ENCODE measurements at regions of chr2 and their contacts with region 1.

Region 1: DNA sequence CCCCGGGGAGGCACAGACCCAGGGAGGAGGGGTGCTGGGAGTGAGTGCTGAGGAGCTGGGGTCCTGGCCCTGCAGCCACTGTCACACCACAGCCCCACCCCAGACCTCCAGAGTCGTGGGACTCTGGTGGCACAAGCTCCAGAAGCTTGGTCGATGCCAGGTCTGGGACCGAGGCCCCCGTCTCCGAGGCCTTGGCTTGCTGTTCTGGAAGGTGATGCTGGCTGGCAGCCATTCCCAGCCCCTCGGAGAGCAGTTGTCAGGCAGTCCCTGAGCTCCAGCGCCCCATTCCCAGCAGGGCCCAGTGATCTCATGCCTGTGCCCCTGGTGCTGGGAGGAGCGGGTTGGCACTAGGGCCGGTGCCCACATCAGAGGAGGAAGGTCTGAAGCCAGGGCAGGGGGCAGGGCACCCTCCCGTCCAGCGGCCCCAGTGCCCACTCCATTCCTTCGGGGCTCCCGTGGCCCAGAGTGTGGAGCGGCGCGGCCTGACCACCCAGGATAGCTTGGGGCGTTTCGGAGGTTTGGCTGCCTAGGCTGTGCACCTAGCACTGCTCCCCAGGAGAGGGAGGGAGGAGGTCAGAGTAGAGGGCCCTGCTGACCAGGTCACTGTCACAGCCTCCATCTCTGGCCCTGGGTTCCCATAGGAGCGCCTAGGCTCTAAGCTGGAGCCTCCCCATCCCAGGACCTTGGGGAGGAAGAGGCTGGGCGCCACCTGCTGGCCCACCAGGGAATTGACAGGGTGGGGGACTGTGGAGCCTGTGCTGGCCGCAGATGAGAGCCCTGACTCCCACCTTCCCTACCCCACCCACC is 16.8 kb upstream of the ALPI start:
- DNase-seq: peak; percentile 65
- ATAC-seq: peak; percentile 55
- H3K4me3 Mint-ChIP-seq: no peak overlapping the region
- H3K27ac Mint-ChIP-seq: no peak overlapping the region
- H3K4me1 Mint-ChIP-seq: peaks cover 3% of the 10 kb centered on the region
- H3K27me3 Mint-ChIP-seq: peaks cover 2% of the 10 kb centered on the region

Region 2: DNA sequence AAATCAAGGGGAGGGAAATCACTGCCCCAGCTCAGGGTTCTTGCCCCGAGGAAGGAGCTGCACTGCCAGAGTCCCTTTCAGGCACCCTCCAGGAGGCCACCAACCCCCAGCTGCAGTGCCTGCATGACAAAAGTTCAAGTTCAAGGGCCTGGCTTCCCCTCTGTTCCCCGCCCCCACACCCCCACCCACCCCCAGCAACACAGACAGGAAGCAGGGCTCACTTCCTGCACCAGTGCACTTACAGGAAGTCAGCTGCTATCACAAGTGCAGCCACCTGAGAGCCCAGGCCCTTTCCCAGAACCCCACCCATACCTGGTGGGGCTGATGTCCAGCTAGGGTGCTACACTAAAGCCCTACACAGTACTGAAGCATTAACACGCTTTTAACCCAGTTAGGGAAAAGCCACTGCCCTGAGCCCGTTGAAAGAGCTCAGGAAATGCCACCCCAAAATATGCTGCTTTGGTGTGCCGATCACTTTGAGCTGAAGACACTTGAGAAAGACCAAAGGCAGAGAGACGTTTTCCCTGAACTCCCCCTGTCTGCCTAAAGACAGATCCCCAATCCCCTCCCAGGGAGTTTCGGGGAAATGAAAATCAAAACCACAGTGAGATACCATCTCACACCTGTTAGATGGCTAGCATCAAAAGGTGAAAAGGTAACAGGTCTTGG is 1836.5 kb before region 1 on chr2:
- CTCF ChIA-PET with region 1: no interaction called
- POLR2A ChIA-PET with region 1: no interaction called
- intact Hi-C with region 1: no loop called
- DNase-seq: peak; percentile 71
- ATAC-seq: peak; percentile 83
- H3K4me3 Mint-ChIP-seq: peak overlapping the region; percentile 6
- H3K27ac Mint-ChIP-seq: peak overlapping the region; percentile 89
- H3K4me1 Mint-ChIP-seq: peaks cover 48% of the 10 kb centered on the region
- H3K27me3 Mint-ChIP-seq: no peaks in the 10 kb centered on the region

Region 3: DNA sequence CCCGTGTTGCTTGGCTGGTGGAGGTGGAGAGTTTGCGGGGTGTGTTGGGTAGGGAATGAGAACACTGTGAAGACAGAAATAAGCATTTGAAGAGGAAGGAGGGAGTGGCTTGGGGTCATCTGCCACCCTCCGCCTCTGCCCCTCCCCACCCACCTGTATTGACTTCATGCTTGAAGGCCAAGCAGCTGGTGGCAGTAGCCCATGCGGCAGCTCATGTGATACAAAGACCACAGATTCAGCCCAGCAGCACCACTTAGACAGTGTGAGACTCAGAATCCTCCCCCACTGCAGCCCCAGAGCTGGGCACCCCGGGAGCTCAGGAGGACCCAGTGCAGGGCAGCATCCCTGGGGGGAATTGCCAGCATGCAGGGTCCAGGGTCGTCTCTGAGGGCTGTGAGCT is 528.4 kb before region 1 on chr2:
- CTCF ChIA-PET with region 1: interaction called, 11 read pairs
- POLR2A ChIA-PET with region 1: no interaction called
- intact Hi-C with region 1: loop called (anchors 1 kb)
- DNase-seq: no peak
- ATAC-seq: no peak
- H3K4me3 Mint-ChIP-seq: no peak overlapping the region
- H3K27ac Mint-ChIP-seq: no peak overlapping the region
- H3K4me1 Mint-ChIP-seq: peaks cover 13% of the 10 kb centered on the region
- H3K27me3 Mint-ChIP-seq: no peaks in the 10 kb centered on the region

Region 4: DNA sequence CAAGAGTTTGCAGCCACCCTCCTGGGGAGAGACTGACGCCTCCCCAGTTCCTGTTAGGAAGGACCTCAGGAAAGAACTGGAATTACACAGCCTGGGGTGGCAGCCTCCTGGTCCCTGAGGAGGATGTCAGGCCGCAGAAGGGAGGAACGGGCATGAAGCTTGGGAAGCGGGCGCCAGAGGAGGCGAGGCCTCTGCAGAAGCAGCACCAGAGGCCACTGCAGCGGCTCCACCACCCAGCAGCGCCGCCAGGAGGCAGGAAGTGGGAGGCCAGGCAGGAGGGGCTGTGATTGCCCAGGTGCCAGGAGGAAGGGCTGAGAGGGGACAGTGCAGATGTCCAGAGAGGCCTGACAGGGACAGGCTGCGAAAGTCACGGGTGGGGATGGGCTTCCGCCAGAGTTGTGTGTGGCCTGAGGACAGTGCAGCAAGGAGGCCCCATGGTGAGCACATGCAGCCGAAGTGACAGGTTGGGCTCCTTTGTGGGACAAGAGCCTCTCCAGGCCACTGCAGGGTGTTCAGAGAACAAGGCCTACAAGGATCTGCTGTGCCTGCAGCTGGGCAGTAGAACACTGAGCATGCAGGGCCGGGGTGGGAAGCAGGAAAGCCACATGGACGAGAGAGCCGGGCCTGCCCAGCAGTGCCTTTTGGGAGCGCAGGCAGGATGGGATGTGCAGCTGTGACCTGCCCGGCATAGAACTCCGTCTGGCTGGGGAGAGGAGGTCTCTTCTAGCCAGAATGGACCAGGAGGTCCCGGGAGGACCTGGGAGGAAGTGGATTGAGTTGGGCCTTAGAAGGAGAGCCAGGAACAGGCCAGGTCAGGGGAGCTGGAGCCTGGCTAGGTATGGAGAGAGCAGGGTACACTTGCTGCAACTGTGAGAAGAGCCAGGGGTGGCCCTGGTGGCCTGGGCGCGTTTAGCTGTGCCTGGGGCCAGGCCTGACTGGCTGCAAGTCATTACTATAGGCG is 99.8 kb before region 1 on chr2:
- CTCF ChIA-PET with region 1: interaction called, 3 read pairs
- POLR2A ChIA-PET with region 1: no interaction called
- intact Hi-C with region 1: loop called (anchors 1 to 5 kb)
- DNase-seq: peak; percentile 22
- ATAC-seq: no peak
- H3K4me3 Mint-ChIP-seq: no peak overlapping the region
- H3K27ac Mint-ChIP-seq: no peak overlapping the region
- H3K4me1 Mint-ChIP-seq: peaks cover 2% of the 10 kb centered on the region
- H3K27me3 Mint-ChIP-seq: no peaks in the 10 kb centered on the region

Region 5: DNA sequence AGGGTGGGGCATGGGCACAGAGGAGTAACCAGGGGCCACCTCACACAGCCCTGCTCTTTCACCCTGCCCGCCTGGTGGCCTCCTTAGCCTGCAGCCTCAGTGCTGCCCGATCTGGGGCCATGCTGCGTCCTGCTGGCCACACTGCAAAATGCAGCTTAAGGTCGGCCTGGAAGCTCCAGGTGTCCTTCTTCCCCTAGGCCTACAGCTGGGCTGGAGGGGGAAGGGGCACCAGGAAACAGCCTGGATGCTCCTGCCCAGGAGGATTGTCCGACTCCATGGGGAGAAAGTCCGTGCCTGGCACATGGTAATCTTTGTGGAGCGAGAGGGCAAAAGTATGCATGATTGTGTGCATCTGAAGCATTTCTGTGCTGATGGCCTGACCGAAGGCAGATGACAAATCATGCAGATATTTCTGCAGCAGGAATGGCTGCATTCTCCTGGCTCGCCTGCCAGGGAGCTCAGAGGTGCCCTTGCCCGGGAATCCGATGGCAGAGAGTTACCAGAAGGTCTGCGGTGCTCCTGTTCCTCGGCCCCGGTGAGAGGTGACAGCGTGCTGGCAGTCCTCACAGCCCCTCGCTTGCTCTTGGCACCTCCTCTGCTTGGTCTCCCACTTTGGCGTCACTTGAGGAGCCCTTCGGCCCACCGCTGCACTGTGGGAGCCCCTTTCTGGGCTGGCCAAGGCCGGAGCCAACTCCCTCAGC is 73.4 kb before region 1 on chr2:
- CTCF ChIA-PET with region 1: interaction called, 4 read pairs
- POLR2A ChIA-PET with region 1: interaction called, 4 read pairs
- intact Hi-C with region 1: loop called in 1 of 2 experiments (anchors 2 kb)
- DNase-seq: peak; percentile 43
- ATAC-seq: peak; percentile 70
- H3K4me3 Mint-ChIP-seq: no peak overlapping the region
- H3K27ac Mint-ChIP-seq: no peak overlapping the region
- H3K4me1 Mint-ChIP-seq: peaks cover 23% of the 10 kb centered on the region
- H3K27me3 Mint-ChIP-seq: no peaks in the 10 kb centered on the region

Region 6: GRCh38 chr2:232463701-232464543 is 24.8 kb after region 1 on chr2:
- CTCF ChIA-PET with region 1: no interaction called
- POLR2A ChIA-PET with region 1: no interaction called
- intact Hi-C with region 1: no loop called
- DNase-seq: no peak
- ATAC-seq: no peak
- H3K4me3 Mint-ChIP-seq: no peak overlapping the region
- H3K27ac Mint-ChIP-seq: no peak overlapping the region
- H3K4me1 Mint-ChIP-seq: no peaks in the 10 kb centered on the region
- H3K27me3 Mint-ChIP-seq: peaks cover 8% of the 10 kb centered on the region